Dorsolateral prefrontal cortex (tissue), 120 donors: ENCODE measurements at regions of chr12 and their contacts with region 1.

Region 1: DNA sequence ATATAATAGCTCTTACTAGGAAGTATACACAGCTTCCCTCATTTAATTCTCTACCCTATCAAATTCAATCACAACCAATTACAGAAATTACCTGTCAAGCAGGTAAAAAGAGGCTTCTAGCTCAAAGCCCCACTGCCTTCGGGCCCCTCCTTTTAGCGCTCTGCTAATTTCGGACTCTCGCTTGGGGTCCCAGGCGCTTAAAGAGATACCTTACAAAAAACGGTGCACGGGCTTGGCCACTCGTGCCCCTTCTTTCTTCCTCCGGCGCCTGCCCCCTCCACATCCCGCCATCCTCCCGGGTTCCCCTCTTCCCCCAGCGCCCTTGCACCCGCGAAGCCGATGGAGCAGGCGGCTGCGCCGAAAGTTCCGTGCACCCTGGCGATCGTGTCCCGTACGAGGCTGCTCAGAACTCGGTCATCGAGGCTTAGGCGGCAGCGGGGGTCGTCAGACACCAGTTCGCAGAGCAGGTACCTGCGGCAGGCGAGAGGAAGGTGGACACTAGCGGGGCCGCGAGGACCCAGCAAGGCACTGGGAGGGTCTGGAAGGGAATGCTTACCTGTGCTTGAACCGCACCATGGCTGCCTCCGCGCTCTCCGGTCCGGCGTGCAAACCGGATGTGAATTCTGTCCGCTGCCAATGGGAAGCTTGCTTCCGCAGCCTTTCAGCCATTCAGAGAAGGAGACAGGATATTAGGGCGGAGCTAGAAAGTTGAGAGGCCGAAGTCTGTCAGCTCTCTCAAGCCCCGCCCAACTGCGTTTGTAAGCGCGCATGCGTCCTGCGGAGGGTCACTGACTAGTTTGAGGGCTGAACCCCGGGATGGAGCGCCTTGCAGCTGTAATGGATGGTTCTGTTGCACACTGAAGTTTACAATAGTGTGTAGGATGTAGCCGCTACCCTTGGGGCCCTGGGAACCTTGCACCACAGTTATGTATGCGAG is at the start of gene POP5:
- DNase-seq: peak; percentile 97 to 99 (median 98)
- H3K4me3 ChIP-seq: peak within 1 kb of the TSS; percentile 62 to 99 (median 90)
- H3K27ac ChIP-seq: peak within 1 kb of the TSS in 55 of 59 donors; percentile 2 to 91 (median 74)
- H3K27me3 ChIP-seq: no peaks in the 10 kb centered on the region
- CTCF ChIP-seq: peak in 44 of 56 donors; percentile 10 to 68 (median 39)
- total RNA-seq, gene POP5: 18.5 to 43.3 (median 29.0) TPM

Region 2: DNA sequence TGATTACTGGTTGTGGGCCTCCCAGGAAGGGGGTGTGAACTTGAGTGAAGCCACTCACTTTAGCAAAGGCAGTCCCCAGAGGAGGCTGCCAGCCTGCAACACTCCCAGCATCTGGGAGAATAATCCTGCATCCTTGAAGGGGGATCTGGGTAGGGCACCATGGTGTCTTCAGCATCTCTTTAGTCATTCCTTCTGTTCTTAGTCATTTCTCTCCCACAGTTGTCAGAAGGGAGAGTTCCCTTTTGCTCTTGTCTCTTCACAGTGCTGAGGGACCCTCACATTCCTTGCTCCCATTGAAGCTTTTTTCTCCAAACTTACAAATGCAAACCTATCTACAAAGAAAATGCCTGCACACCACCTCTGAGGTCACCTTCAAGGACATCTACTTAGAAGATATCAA is 655.8 kb before region 1 on chr12:
- intact Hi-C with region 1: no loop called
- DNase-seq: no peak
- H3K4me3 ChIP-seq: no peak overlapping the region
- H3K27ac ChIP-seq: no peak overlapping the region
- H3K27me3 ChIP-seq: peaks cover 0 to 4% (median 0%) of the 10 kb centered on the region in 45 donors
- CTCF ChIP-seq: no peak

Region 3: DNA sequence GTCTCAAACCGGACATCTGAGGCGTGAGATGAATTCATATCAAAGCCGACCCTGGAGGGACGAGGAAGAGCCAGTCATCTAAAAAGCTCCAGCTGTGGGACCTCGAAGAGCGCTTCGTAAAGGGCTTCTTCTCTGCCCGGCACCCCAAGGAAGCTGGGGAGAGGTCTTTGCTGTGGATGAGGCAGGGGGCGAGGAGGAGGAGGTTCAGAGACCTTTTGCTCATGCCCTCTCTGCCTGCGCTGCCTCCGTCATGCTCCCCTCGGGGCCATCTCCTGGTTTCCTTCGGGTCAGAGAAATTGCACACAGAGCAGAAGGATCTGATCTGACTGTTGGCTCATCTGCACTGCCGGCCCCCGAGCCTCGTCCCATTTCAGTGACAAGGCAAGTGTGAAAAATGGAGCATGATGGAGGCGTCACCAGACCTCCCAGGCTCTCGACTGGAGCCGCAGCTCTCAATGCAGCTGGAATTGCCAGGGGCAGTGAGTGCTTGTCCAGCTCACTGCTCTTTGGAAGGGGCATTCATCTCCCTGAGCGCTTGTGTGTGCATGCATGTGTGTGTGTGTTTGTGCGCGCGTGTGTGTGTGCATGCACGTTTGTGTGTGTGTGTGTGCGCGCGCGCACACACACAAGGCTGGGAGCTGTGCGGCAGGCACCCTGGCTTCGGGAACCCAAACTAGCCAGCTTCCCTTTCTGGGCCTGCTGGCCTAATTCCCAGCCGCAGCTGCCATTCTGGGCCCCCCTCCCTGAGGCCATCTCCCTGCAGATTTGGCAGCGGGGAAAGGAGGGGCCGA is 68.6 kb after region 1 on chr12:
- intact Hi-C with region 1: loop called (anchors 1 to 2 kb)
- DNase-seq: peak in 3 of 10 donors; percentile 28 to 58 (median 52)
- H3K4me3 ChIP-seq: peak overlapping the region; percentile 13 to 63 (median 46)
- H3K27ac ChIP-seq: peak overlapping the region in 55 of 59 donors; percentile 19 to 88 (median 76)
- H3K27me3 ChIP-seq: peaks cover 0 to 6% (median 0%) of the 10 kb centered on the region in 45 donors
- CTCF ChIP-seq: peak in 18 of 56 donors; percentile 0 to 43 (median 17)

Region 4: DNA sequence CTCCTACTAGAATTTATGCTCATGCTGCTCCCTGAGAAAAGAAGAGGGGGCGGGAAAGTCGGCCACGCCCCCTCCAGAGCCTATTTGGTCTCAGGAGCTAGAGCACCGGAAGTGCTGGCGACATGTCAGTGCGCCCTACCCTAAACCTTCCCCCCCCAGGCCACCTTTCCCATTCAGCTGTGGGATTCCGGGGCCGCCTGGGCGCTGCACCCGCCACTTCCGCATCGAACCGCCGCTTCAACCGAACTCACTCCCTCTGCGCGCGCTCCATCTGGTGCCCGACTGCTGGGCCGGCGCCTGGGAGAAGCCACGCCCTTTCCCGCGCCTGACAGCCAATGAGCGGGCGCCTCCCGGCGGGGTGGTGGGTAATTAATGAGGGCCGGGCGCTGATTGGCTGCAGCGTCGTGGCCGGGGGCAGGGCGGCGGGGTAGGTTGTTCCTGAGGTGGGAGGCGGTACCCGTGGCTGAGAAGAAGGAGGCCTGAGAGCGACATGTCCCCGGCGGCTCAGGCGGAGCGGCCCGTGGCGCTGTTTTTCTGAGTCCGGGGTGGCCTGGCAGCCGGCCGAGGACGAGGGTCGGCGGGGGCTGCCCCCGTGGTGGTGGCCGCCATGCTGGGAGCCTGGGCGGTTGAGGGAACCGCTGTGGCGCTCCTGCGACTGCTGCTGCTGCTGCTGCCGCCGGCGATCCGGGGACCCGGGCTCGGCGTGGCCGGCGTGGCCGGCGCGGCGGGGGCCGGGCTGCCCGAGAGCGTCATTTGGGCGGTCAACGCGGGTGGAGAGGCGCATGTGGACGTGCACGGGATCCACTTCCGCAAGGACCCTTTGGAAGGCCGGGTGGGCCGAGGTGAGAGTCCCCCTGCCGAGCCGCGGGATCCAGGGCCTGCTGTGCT is 105.9 kb after region 1 on chr12 and contains the start of gene MLEC:
- intact Hi-C with region 1: no loop called
- DNase-seq: peak; percentile 96 to 99 (median 98)
- H3K4me3 ChIP-seq: peak within 1 kb of the TSS; percentile 70 to 100 (median 94)
- H3K27ac ChIP-seq: peak within 1 kb of the TSS; percentile 81 to 99 (median 96)
- H3K27me3 ChIP-seq: no peaks in the 10 kb centered on the region
- CTCF ChIP-seq: peak in 31 of 56 donors; percentile 8 to 58 (median 31)
- total RNA-seq, gene MLEC: 50.4 to 97.1 (median 73.3) TPM

Region 5: DNA sequence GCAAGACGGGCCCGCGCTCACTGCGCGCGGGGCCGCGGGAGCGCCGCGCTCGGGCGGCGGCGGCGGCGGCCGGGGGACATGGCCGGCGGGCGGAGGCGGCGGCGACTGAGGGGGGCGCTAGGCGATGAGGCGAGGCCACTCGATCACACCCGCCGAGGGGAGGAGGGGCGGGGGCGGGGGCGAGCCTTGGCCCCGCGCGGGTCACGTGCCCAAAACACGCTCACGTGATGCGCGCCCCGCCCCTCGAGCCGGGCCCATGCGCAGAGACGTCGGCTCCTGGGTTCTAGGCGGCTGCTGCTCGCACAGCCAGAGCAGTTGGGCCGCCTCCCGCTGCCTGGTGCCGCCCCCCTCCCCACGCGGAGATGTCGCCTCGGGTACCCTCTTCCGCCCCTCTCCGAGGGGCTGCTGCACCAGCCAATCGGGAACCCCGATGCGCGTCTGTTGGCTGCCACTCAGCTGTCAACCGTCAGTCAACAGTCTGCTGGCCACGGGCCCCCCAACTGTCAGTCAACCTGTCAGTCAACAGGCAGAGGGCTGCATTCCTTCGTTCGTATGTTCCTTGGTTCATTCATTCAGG is 323.2 kb after region 1 on chr12 and contains the start of gene SPPL3:
- intact Hi-C with region 1: loop called in 1 of 2 experiments (anchors 5 kb)
- DNase-seq: peak; percentile 78 to 96 (median 92)
- H3K4me3 ChIP-seq: peak within 1 kb of the TSS; percentile 66 to 97 (median 89)
- H3K27ac ChIP-seq: peak within 1 kb of the TSS; percentile 83 to 98 (median 94)
- H3K27me3 ChIP-seq: no peaks in the 10 kb centered on the region
- CTCF ChIP-seq: peak in 44 of 56 donors; percentile 9 to 58 (median 36)
- total RNA-seq, gene SPPL3: 50.6 to 111 (median 72.4) TPM

Region 6: GRCh38 chr12:121005346-121005815 is 424.3 kb after region 1 on chr12:
- intact Hi-C with region 1: loop called in 1 of 2 experiments (anchors 5 kb)
- DNase-seq: peak in 3 of 10 donors; percentile 17 to 54 (median 40)
- H3K4me3 ChIP-seq: no peak overlapping the region
- H3K27ac ChIP-seq: peak overlapping the region in 2 of 59 donors; percentile 18 to 20
- H3K27me3 ChIP-seq: no peaks in the 10 kb centered on the region
- CTCF ChIP-seq: peak in 52 of 56 donors; percentile 13 to 54 (median 34)